ENCODE measurements at regions of chr3 and their contacts with region 1.

Region 1: DNA sequence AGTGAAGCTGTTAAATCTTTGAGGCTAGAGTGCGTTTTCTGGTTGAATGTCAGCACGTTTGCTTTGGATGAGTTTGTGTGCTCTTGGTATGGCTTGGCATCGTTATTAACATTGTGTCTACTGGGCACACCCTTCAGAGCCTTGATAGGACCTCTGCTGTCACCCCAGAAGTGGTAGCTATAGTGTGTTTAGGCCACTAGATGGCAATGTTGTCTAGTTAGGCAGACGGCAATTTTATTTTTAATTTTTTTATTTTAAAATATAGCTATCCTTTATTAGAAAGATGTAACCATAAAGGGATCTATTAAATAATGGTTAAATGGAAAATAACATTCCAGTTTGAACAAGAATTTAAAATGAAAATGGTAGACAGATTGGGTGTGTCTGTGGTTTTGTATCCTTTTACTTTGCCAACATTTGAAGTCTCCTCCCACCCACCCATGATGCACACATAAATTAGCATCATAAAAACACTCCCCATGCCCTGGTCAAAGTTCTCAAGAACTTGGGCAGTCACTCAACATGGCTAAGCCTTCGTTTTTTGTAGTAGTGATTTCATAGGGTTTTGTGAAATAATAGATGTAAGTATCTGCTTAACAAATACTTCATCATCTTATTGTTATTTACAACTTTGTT is 200.7 kb downstream of the KCNH8 start:
- DNase-seq: peak in 1 of 2 donors; percentile 6
- H3K4me3 ChIP-seq: no peak overlapping the region
- H3K27ac ChIP-seq: no peak overlapping the region
- H3K4me1 ChIP-seq: no peaks in the 10 kb centered on the region
- H3K27me3 ChIP-seq: no peaks in the 10 kb centered on the region
- CTCF ChIP-seq: peak; percentile 50 to 86 (median 58)
- POLR2A ChIP-seq: no peak

Region 2: GRCh38 chr3:19547665-19548464 is 198.8 kb after region 1 on chr3:
- intact Hi-C with region 1: loop called (anchors 5 kb)
- DNase-seq: no peak
- H3K4me3 ChIP-seq: no peak overlapping the region
- H3K27ac ChIP-seq: no peak overlapping the region
- H3K4me1 ChIP-seq: no peaks in the 10 kb centered on the region
- H3K27me3 ChIP-seq: no peaks in the 10 kb centered on the region
- CTCF ChIP-seq: no peak
- POLR2A ChIP-seq: no peak

Region 3: DNA sequence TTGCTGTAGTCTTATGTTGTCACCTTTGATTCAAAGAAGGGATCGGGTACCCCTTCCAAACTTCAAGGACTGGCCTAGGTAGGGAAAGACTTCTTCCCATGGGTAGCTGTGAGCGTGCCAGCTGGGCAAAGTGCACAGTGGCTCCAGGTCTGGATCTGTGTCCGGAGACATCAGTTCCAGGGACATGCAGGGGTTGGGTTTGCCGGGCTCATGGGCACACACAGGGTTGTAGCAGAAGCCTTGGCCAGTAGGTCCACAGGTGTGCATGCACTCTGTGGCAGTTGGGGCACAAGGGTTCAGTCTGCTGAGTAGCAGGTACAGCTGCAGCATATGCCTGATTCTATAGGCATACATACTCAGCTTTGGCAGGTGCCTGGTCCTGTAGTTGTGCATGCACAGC is 473.8 kb after region 1 on chr3:
- intact Hi-C with region 1: no loop called
- DNase-seq: no peak
- H3K4me3 ChIP-seq: no peak overlapping the region
- H3K27ac ChIP-seq: no peak overlapping the region
- H3K4me1 ChIP-seq: no peaks in the 10 kb centered on the region
- H3K27me3 ChIP-seq: no peaks in the 10 kb centered on the region
- CTCF ChIP-seq: no peak
- POLR2A ChIP-seq: no peak

Measured in thyroid gland (tissue), 4 donors.